ENCODE measurements at regions of chr17 and their contacts with region 1.

Region 1: GRCh38 chr17:50094753-50095619 is at the start of gene PDK2:
- DNase-seq: peak; percentile 47
- H3K4me3 ChIP-seq: peak within 1 kb of the TSS; percentile 89
- CTCF ChIP-seq: no peak

Region 2: GRCh38 chr17:50026901-50027630 is 67.9 kb before region 1 on chr17:
- CTCF ChIA-PET with region 1: interaction called, 165 read pairs
- POLR2A ChIA-PET with region 1: no interaction called
- DNase-seq: no peak
- H3K4me3 ChIP-seq: peak overlapping the region; percentile 51
- CTCF ChIP-seq: peak; percentile 95

Region 3: GRCh38 chr17:50064258-50065001 is 30.6 kb before region 1 on chr17:
- CTCF ChIA-PET with region 1: interaction called, 36 read pairs
- POLR2A ChIA-PET with region 1: interaction called, 4 read pairs
- DNase-seq: peak; percentile 94
- H3K4me3 ChIP-seq: no peak overlapping the region
- CTCF ChIP-seq: no peak

Region 4: GRCh38 chr17:50114849-50115357 is 19.9 kb after region 1 on chr17:
- CTCF ChIA-PET with region 1: interaction called, 92 read pairs
- POLR2A ChIA-PET with region 1: no interaction called
- DNase-seq: no peak
- H3K4me3 ChIP-seq: no peak overlapping the region
- CTCF ChIP-seq: peak; percentile 69

Region 5: DNA sequence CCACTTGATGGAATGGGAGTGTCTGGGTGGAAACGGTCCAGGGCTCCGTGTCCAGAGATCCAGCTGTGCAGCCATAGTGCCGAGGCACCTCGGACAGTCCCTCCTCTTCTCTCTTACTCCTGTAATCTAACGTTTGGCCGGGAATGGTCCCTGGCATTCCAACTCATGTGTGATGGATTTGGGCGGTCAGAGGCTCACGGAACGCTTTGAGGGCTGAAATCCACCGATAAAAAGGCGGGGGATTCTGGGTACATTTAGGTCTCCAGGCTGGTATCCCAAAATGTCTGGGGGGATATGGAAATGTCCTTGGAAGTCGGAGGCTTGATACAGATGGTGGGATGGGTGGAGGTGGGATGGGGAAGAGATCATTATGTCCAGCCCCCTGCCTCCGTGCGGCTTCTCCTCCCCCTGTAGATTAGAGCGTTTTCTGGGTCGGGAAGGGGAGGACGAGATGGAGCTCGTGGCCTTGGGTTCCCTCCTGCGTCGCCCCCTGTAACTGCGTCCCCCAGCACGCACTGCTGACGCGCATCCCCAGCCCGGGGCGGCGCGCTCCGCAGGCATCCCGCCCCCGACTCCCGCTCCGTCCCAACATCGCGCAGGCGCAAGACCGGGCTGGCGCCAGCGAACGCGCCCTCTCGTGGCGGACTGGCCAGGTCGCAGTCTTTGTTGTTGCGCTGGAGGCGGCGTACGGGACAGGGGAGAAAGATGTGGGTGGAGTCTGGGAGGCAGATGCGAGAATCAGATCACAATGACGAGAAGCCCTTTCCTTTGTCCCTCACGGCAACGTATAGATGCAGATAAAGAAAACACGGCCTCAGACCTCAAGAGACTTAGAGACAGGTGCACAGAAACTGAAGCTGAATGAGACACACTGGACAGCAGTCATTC is 66.3 kb after region 1 on chr17:
- CTCF ChIA-PET with region 1: interaction called, 100 read pairs
- POLR2A ChIA-PET with region 1: no interaction called
- DNase-seq: no peak
- H3K4me3 ChIP-seq: peak overlapping the region; percentile 75
- CTCF ChIP-seq: peak; percentile 97

Region 6: DNA sequence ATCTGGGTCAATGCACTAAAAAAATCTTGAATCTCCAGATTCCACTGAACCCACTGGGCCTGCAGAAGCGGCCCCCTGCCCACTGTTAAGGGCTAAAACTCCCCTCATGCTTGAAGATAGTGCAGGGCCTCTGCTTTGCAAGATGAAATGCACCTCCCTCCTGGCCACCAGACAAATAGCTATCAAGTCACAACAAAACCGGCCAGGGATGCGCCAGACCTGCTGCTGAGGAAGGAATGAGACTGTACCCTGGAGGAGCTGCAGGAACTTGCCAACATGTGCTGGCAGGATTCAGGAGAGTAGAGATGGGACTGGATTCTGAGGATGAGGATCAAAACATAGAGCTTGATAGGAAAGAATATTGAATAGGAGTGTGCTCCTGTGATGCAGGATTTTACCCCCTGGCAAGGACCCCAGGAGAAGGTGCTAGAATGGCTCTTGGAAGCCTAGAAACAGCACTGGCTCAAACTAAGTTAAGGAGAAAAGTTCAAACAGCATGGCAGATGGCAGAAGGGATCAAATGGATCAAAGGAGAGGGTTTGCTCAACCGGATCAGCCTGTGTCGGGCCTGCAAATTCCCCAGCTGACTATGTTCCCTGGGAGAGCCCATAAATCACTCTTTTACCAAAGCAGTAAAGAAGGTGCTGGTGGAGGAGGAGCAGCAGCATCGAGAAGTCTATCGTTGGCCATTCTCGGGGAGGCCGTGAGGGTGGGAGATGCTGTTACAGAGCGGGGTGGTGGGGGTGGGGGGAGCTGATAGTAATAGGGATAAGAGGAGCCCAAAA is 223.7 kb after region 1 on chr17:
- CTCF ChIA-PET with region 1: interaction called, 10 read pairs
- POLR2A ChIA-PET with region 1: no interaction called
- DNase-seq: no peak
- H3K4me3 ChIP-seq: no peak overlapping the region
- CTCF ChIP-seq: no peak

Measured in AG04449 (cell line).